Dendritic cell treated with granulocyte-macrophage colony-stimulating factor and Interleukin-4, amounts not matched to agents 40 ng/mL and 50 ng/mL, for 4 days (primary cell): ENCODE measurements at regions of chr13 and their contacts with region 1.

Region 1: DNA sequence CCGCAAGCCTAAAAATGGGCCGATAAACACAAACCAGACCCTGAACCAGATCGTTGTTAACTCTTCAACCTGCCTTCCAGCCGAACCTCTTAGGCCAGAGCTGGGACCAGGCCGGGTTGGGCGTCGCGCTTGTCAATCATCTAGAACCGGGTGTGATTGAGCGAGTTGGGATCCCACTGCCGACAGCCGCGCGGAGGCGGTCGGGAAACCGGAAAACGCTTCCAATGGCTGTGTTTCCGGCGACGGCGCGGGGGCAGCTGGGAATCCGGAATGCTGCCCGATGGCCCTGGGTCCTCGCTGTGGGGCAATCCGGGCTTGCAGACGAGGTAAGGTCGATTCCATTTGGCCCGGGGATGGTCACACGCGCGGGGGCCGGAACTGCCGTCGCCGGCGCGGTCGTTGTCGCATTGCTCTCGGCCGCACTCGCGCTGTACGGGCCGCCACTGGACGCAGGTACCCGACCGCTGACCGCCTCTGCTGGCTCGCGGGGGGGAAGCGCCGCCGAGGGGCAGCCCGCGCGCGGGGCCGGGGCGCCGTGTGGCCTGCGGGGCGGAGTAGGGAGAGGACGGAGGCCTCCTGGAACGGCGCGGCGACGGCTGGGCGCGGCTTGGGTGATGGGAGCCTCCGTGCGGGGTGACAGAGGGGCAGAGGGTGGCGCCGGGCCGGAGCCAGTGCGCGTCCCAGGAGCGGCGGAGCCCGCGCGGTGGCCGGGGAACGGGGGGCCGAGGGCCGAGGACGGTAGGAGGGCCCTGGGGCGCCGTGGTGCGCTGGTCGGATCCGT is at the start of gene NAXD:
- H3K4me3 Mint-ChIP-seq: peak within 1 kb of the TSS; percentile 82
- H3K27ac Mint-ChIP-seq: peak within 1 kb of the TSS; percentile 83
- H3K4me1 Mint-ChIP-seq: peaks cover 22% of the 10 kb centered on the region
- H3K27me3 Mint-ChIP-seq: peaks cover 4% of the 10 kb centered on the region

Region 2: DNA sequence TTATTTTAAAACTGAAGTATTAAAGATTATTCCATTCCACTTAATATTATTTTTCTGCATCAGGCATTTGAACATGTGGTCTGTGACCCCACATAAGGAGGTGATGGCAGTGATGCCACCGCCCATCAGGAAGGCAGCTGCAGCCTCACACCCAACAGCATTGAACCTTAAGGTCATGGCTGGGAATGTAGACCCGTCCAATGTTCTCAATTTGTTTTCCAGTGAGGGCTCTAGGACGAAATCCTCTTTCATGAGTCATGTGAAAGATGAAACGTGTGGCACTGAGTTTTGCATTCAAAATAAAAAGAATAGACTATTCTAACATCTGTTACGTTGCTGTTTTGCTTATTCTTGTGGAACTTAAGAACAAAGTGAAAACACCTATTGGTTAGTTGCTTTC is 373.8 kb after region 1 on chr13:
- intact Hi-C with region 1: no loop called
- H3K4me3 Mint-ChIP-seq: no peak overlapping the region
- H3K27ac Mint-ChIP-seq: no peak overlapping the region
- H3K4me1 Mint-ChIP-seq: no peaks in the 10 kb centered on the region
- H3K27me3 Mint-ChIP-seq: peaks cover 11% of the 10 kb centered on the region

Region 3: GRCh38 chr13:111145506-111145905 is 530.0 kb after region 1 on chr13:
- intact Hi-C with region 1: loop called (anchors 5 kb)
- H3K4me3 Mint-ChIP-seq: no peak overlapping the region
- H3K27ac Mint-ChIP-seq: no peak overlapping the region
- H3K4me1 Mint-ChIP-seq: no peaks in the 10 kb centered on the region
- H3K27me3 Mint-ChIP-seq: peaks cover 45% of the 10 kb centered on the region